ENCODE measurements at regions of chr2 and their contacts with region 1.

Region 1: GRCh38 chr2:246489-247144 is 17.2 kb downstream of the SH3YL1 start:
- DNase-seq: peak; percentile 33
- H3K4me3 ChIP-seq: no peak overlapping the region
- H3K27ac ChIP-seq: no peak overlapping the region
- H3K4me1 ChIP-seq: no peaks in the 10 kb centered on the region
- H3K27me3 ChIP-seq: no peaks in the 10 kb centered on the region
- CTCF ChIP-seq: peak in 3 of 4 experiments; percentile 49 to 66 (median 50)
- POLR2A ChIP-seq: no peak

Region 2: GRCh38 chr2:275466-275865 is 28.8 kb after region 1 on chr2:
- intact Hi-C with region 1: no loop called
- DNase-seq: no peak
- H3K4me3 ChIP-seq: no peak overlapping the region
- H3K27ac ChIP-seq: no peak overlapping the region
- H3K4me1 ChIP-seq: no peaks in the 10 kb centered on the region
- H3K27me3 ChIP-seq: no peaks in the 10 kb centered on the region
- CTCF ChIP-seq: no peak
- POLR2A ChIP-seq: no peak

Region 3: GRCh38 chr2:290090-290722 is 43.6 kb after region 1 on chr2:
- intact Hi-C with region 1: loop called (anchors 10 kb)
- DNase-seq: peak; percentile 69
- H3K4me3 ChIP-seq: peak overlapping the region; percentile 26 to 35
- H3K27ac ChIP-seq: no peak overlapping the region
- H3K4me1 ChIP-seq: peaks cover 6% of the 10 kb centered on the region
- H3K27me3 ChIP-seq: peaks cover 8% of the 10 kb centered on the region
- CTCF ChIP-seq: peak; percentile 35 to 73 (median 63)
- POLR2A ChIP-seq: no peak

Region 4: GRCh38 chr2:429575-430254 is 183.1 kb after region 1 on chr2:
- intact Hi-C with region 1: no loop called
- DNase-seq: no peak
- H3K4me3 ChIP-seq: no peak overlapping the region
- H3K27ac ChIP-seq: no peak overlapping the region
- H3K4me1 ChIP-seq: no peaks in the 10 kb centered on the region
- H3K27me3 ChIP-seq: no peaks in the 10 kb centered on the region
- CTCF ChIP-seq: no peak
- POLR2A ChIP-seq: no peak

Region 5: GRCh38 chr2:636641-637405 is 390.2 kb after region 1 on chr2:
- intact Hi-C with region 1: loop called (anchors 5 kb)
- DNase-seq: peak; percentile 57
- H3K4me3 ChIP-seq: peak overlapping the region; percentile 7 to 18
- H3K27ac ChIP-seq: no peak overlapping the region
- H3K4me1 ChIP-seq: no peaks in the 10 kb centered on the region
- H3K27me3 ChIP-seq: no peaks in the 10 kb centered on the region
- CTCF ChIP-seq: peak; percentile 70 to 89 (median 86)
- POLR2A ChIP-seq: no peak